Ovary (tissue), 10 donors: ENCODE measurements at regions of chr7 and their contacts with region 1.

Region 1: DNA sequence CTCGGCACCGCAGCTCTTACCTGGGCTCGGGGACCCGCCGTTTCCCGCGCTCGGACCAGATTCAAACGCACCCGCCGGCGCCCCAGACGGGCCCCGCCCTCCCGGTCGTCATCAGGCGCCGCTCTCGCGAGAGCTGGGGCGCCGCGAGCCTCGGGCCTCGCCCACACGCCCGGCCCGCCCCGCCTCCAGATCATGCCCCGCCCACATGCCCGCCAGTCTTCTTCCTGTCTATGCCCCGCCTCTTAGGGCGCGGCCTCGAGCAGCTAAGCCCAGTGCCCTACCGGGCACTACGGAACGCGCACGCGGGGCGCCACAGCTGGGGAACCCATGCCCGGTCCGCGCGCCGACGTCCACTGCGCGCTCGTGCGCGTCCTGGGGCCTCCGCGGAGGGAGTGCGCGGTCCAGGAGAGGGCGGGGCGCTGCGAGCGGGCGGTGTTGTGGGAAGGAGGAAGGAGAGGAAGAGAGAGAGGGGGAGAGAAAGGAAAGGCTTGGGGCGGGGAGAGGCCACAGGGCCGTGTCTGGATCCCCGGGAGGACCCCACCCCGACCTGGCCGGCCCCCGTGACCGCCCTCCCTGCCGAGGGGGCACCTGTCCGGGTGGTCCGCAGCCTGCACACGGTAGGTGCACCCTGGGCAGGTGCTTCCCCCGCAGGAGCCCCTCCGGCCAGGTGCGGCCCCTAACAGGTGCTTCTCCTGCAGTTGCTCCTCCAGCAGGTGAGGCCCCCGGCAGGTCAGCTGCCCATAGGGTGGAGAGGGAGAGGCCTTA is at the start of gene NCAPG2:
- DNase-seq: peak; percentile 98 to 99 (median 99)
- H3K4me3 ChIP-seq: peak within 1 kb of the TSS; percentile 81
- H3K27ac ChIP-seq: peak within 1 kb of the TSS; percentile 15 to 84
- H3K4me1 ChIP-seq: peaks cover 1% of the 10 kb centered on the region
- H3K27me3 ChIP-seq: no peaks in the 10 kb centered on the region
- CTCF ChIP-seq: peak; percentile 31 to 73 (median 73)
- EP300 ChIP-seq: no peak
- POLR2A ChIP-seq: peak; percentile 96
- total RNA-seq, gene NCAPG2: 4.2 to 9.3 (median 6.0) TPM

Region 2: GRCh38 chr7:158740013-158740656 is 35.2 kb after region 1 on chr7:
- intact Hi-C with region 1: no loop called
- DNase-seq: peak; percentile 48 to 69 (median 52)
- H3K4me3 ChIP-seq: no peak overlapping the region
- H3K27ac ChIP-seq: no peak overlapping the region
- H3K4me1 ChIP-seq: peaks cover 4% of the 10 kb centered on the region
- H3K27me3 ChIP-seq: no peaks in the 10 kb centered on the region
- CTCF ChIP-seq: no peak
- EP300 ChIP-seq: no peak
- POLR2A ChIP-seq: no peak

Region 3: GRCh38 chr7:158829342-158830210 is 124.7 kb after region 1 on chr7 and contains the start of gene ESYT2:
- intact Hi-C with region 1: loop called in 1 of 4 experiments (anchors 10 kb)
- DNase-seq: peak; percentile 98 to 100 (median 100)
- H3K4me3 ChIP-seq: peak within 1 kb of the TSS; percentile 95
- H3K27ac ChIP-seq: peak within 1 kb of the TSS; percentile 97 to 98
- H3K4me1 ChIP-seq: peaks cover 6% of the 10 kb centered on the region
- H3K27me3 ChIP-seq: no peaks in the 10 kb centered on the region
- CTCF ChIP-seq: peak in 2 of 3 donors; percentile 23 to 37
- EP300 ChIP-seq: peak; percentile 54
- POLR2A ChIP-seq: peak; percentile 99
- total RNA-seq, gene ESYT2: 72.8 to 147 (median 95.9) TPM

Region 4: GRCh38 chr7:158885624-158886023 is 180.7 kb after region 1 on chr7:
- intact Hi-C with region 1: loop called in 1 of 4 experiments (anchors 2 kb)
- DNase-seq: no peak
- H3K4me3 ChIP-seq: no peak overlapping the region
- H3K27ac ChIP-seq: no peak overlapping the region
- H3K4me1 ChIP-seq: no peaks in the 10 kb centered on the region
- H3K27me3 ChIP-seq: no peaks in the 10 kb centered on the region
- CTCF ChIP-seq: peak; percentile 9 to 62 (median 17)
- EP300 ChIP-seq: no peak
- POLR2A ChIP-seq: no peak

Region 5: GRCh38 chr7:158976849-158977593 is 272.1 kb after region 1 on chr7:
- intact Hi-C with region 1: loop called in 1 of 4 experiments (anchors 5 kb)
- DNase-seq: peak; percentile 56 to 81 (median 73)
- H3K4me3 ChIP-seq: peak overlapping the region; percentile 29
- H3K27ac ChIP-seq: no peak overlapping the region
- H3K4me1 ChIP-seq: peaks cover 2% of the 10 kb centered on the region
- H3K27me3 ChIP-seq: no peaks in the 10 kb centered on the region
- CTCF ChIP-seq: peak in 2 of 3 donors; percentile 49 to 61
- EP300 ChIP-seq: no peak
- POLR2A ChIP-seq: no peak